Left colon (tissue), 2 donors: ENCODE measurements at regions of chr19 and their contacts with region 1.

Region 1: DNA sequence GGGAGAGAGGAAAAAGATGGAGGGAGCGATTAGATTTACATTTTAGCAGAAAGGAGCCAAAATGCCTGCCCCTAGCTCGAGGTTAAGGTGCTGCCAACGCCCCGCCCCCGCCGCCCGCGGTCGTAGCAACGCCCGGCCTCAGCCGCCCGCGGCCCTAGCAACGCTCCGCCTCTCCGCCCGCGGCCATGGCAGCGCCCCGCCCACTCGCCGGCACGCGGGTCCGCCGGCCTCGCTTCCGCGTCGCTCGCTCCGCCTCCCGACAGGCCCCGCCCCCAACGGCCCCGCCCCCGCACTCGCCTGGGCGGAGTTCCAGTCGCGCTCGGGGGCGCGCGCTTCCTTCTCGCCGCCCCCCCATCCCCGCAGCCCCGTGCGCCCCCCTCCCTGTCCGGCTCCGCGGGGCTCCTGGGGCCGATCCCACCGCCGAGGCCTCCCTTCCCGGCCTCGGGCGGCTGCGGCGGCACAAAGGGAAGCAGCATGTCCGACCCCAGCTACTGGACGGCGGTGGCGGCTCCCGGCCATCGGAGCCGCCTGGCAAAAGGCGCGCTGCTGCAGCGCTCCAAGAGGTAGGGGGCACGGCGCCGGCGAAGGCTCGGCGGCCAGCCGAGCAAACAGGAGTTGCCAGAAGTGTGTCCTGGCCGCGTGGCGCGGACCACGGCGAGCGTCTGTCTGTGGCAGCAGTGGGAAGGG is 20.3 kb downstream of the MAST3 start:
- DNase-seq: peak; percentile 86 to 95
- ATAC-seq: peak; percentile 92

Region 2: DNA sequence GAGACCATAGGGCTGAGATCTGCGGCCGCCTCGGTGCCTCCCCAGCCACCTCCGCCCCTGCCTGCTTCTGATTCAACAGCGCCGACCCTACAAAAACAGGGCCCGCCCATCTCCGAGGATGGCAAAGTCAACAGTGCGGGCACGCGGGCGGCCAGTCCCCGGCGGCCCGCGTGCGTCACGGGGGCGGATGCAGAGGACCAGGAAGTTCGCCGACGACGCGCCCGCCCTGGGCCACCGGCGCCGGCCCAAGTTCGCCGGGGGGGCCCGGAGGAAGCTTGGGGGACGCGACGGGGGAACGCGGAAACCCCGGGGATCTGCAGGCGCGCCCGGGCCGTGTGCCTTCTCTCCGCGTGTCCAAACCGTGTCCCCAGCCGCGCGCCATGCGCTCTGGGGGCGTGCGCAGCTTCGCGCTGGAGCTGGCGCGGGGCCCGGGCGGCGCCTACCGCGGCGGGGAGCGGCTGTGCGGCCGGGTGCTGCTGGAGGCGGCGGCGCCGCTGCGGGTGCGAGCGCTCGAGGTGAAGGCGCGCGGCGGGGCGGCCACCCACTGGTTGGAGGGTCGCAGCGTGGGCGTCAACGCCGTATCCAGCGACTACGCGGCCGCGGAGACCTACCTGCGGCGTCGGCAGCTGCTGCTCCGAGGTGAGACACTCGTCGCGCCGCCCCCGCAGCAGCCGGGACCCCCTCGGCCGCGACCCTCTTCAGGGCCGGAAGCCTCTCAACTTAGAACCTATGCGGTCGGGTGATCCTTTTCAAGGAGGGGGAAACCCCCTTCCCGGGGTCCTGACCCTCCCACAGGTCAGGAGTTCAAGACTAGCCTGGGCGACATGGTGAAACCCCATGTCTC is 116.7 kb before region 1 on chr19:
- intact Hi-C with region 1: no loop called
- DNase-seq: peak; percentile 95 to 96
- ATAC-seq: peak; percentile 87

Region 3: DNA sequence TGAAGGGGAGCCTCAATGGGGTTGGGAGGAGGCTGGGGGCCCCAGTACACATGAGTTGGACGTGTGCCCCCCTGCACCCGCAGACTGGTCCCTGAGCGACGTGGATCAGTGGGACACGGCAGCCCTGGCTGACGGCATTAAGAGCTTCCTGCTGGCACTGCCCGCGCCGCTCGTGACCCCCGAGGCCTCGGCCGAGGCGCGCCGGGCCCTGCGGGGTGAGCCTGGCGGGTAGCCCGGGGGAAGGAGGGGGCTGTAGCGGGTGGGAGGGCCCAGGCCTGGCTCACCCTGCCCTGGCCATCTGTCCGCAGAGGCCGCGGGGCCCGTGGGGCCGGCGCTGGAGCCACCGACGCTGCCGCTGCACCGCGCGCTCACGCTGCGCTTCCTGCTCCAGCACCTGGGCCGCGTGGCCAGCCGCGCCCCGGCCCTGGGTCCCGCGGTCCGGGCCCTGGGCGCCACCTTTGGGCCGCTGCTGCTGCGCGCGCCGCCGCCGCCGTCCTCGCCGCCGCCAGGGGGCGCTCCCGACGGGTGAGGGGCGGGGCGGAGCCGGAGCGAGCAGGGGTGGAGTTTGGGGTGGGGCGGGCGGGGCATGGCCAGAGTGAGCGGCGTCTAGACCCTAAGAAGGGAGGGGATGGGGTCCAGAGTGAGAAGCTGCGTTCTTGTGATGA is 43.3 kb after region 1 on chr19:
- intact Hi-C with region 1: loop called (anchors 5 to 10 kb)
- DNase-seq: peak in 1 of 2 donors; percentile 81
- ATAC-seq: peak; percentile 73

Region 4: GRCh38 chr19:18167975-18168645 is 50.3 kb after region 1 on chr19:
- intact Hi-C with region 1: loop called (anchors 5 to 10 kb)
- DNase-seq: peak; percentile 44 to 62
- ATAC-seq: peak; percentile 52